Activated naive CD4-positive, alpha-beta T cell treated with anti-CD3 and anti-CD28 coated beads for 36 hours (primary cell): ENCODE measurements at regions of chr7 and their contacts with region 1.

Region 1: GRCh38 chr7:22660732-22661131 is 66.3 kb upstream of the IL6 start:
- DNase-seq: peak; percentile 28
- H3K4me3 Mint-ChIP-seq: no peak overlapping the region
- H3K27ac Mint-ChIP-seq: no peak overlapping the region
- H3K4me1 Mint-ChIP-seq: peaks cover 36% of the 10 kb centered on the region
- H3K27me3 Mint-ChIP-seq: no peaks in the 10 kb centered on the region

Region 2: GRCh38 chr7:22194637-22195273 is 466.0 kb before region 1 on chr7:
- CTCF ChIA-PET with region 1: no interaction called
- intact Hi-C with region 1: no loop called
- DNase-seq: no peak
- H3K4me3 Mint-ChIP-seq: no peak overlapping the region
- H3K27ac Mint-ChIP-seq: no peak overlapping the region
- H3K4me1 Mint-ChIP-seq: no peaks in the 10 kb centered on the region
- H3K27me3 Mint-ChIP-seq: peaks cover 2% of the 10 kb centered on the region

Region 3: DNA sequence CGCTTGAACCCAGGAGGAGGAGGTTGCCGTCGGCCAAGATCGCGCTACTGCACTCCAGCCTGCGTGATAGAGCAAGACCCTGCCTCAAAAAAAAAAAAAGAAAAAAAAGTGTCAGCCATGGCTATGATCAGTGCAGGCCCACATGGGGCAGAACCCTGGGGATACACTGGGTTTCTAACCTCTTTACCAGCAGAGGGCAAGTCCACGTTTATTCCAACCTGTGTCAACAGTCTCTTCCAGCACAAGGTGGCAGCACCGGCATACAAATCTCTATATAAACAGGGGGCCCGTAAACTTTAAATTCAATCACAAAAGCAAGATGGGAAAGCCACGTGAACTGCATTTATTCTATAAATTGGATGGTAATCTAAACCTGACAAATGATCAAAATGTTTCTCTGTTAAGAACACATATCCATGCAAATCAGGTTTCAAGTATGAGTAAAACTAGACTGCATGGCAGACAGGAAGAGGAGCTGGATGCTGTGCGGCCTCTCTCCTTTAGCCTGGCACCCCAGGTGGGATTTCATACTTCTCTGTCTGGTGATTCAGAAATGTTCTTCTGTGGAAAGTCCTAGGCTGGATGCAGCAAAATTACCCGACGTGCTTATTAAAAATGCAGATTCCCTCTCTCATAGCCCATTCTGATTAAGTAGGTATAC is 100.8 kb before region 1 on chr7:
- CTCF ChIA-PET with region 1: interaction called, 8 read pairs
- intact Hi-C with region 1: loop called (anchors 1 kb)
- DNase-seq: peak; percentile 81
- H3K4me3 Mint-ChIP-seq: no peak overlapping the region
- H3K27ac Mint-ChIP-seq: no peak overlapping the region
- H3K4me1 Mint-ChIP-seq: peaks cover 28% of the 10 kb centered on the region
- H3K27me3 Mint-ChIP-seq: peaks cover 7% of the 10 kb centered on the region

Region 4: GRCh38 chr7:22601812-22602565 is 58.7 kb before region 1 on chr7:
- CTCF ChIA-PET with region 1: no interaction called
- intact Hi-C with region 1: loop called (anchors 2 kb)
- DNase-seq: no peak
- H3K4me3 Mint-ChIP-seq: no peak overlapping the region
- H3K27ac Mint-ChIP-seq: no peak overlapping the region
- H3K4me1 Mint-ChIP-seq: peaks cover 10% of the 10 kb centered on the region
- H3K27me3 Mint-ChIP-seq: peaks cover 18% of the 10 kb centered on the region

Region 5: DNA sequence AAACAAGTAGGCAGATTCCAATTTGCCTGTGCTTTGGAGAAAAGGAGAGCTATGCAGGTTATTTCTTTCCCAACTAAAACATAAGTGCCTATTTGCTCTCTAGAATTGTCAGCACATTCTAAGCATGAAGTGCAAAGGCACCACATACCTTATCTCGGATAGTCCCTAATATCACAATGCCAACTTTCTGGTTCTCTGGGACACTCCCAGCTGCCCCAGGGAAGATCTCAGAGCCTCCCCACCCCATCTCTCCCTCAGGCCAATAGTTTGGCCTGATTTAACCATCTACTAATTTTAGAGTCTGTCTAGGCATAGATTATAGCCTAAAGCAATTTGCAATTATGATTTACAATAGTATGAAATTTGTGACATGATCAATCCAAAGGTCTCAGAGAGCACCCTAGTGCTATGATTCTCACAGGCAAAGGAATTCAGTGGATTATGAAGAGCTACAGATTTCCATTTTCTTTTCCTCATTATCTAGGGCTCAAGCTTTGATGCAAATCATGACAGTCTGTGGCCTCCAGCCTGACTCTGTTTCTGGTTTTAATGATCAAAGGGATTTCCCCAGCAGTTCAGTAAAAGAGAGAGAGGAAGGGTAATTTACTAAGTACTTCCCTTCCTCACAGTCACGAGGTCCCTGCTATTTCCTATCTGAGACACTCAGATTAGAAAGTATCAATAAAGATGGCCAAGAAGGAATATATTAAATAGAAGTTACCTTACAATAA is 37.3 kb after region 1 on chr7:
- CTCF ChIA-PET with region 1: interaction called, 5 read pairs
- intact Hi-C with region 1: loop called (anchors 1 kb)
- DNase-seq: peak; percentile 59
- H3K4me3 Mint-ChIP-seq: no peak overlapping the region
- H3K27ac Mint-ChIP-seq: peak overlapping the region; percentile 84
- H3K4me1 Mint-ChIP-seq: peaks cover 67% of the 10 kb centered on the region
- H3K27me3 Mint-ChIP-seq: no peaks in the 10 kb centered on the region

Region 6: DNA sequence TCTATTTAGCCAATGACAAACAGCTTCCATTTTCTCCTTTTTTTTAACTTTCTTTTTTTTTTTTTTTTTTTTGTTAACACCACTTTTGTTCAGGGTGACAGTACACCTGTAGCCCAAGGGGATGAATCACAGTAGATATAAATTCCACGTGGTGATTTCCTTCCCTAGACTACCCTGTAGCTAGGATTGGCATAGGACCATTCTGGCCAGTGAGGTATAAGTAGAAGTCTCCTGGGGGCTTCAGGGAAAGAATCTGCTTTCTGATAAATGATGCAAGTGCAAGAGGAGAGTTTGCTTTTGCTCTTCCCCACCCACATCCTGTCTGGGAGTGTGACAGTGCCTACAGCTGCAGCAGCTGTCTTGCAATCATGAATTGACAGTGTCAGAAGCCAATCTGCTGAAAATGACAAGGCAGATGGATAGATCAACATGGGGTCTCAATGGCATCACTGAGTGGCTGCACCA is 225.1 kb after region 1 on chr7:
- CTCF ChIA-PET with region 1: no interaction called
- intact Hi-C with region 1: loop called (anchors 1 kb)
- DNase-seq: peak; percentile 88
- H3K4me3 Mint-ChIP-seq: peak overlapping the region; percentile 64
- H3K27ac Mint-ChIP-seq: peak overlapping the region; percentile 98
- H3K4me1 Mint-ChIP-seq: peaks cover 54% of the 10 kb centered on the region
- H3K27me3 Mint-ChIP-seq: no peaks in the 10 kb centered on the region